Gastrocnemius medialis (tissue), 4 donors: ENCODE measurements at regions of chr15 and their contacts with region 1.

Region 1: GRCh38 chr15:44663409-44664308 is at the start of gene SPG11:
- DNase-seq: peak; percentile 95 to 98
- ATAC-seq: peak; percentile 96 to 97
- H3K4me3 ChIP-seq: peak within 1 kb of the TSS; percentile 94 to 98 (median 96)
- H3K27ac ChIP-seq: peak within 1 kb of the TSS; percentile 95 to 99 (median 98)
- H3K4me1 ChIP-seq: peaks cover 21 to 25% of the 10 kb centered on the region in 2 donors
- H3K27me3 ChIP-seq: no peaks in the 10 kb centered on the region
- CTCF ChIP-seq: peak; percentile 93 to 98 (median 96)
- POLR2A ChIP-seq: peak; percentile 92 to 96
- total RNA-seq, gene SPG11: 32.8 to 51.7 (median 43.2) TPM

Region 2: GRCh38 chr15:44728576-44729407 is 65.1 kb after region 1 on chr15:
- in situ Hi-C with region 1: loop called in 1 of 4 experiments (anchors 10 kb)
- intact Hi-C with region 1: loop called (anchors 2 kb)
- DNase-seq: peak; percentile 90 to 96
- ATAC-seq: peak; percentile 98
- H3K4me3 ChIP-seq: peak overlapping the region; percentile 60 to 98 (median 84)
- H3K27ac ChIP-seq: peak overlapping the region; percentile 87 to 100 (median 96)
- H3K4me1 ChIP-seq: peaks cover 16 to 24% of the 10 kb centered on the region in 2 donors
- H3K27me3 ChIP-seq: no peaks in the 10 kb centered on the region
- CTCF ChIP-seq: no peak
- POLR2A ChIP-seq: peak; percentile 80 to 87

Region 3: DNA sequence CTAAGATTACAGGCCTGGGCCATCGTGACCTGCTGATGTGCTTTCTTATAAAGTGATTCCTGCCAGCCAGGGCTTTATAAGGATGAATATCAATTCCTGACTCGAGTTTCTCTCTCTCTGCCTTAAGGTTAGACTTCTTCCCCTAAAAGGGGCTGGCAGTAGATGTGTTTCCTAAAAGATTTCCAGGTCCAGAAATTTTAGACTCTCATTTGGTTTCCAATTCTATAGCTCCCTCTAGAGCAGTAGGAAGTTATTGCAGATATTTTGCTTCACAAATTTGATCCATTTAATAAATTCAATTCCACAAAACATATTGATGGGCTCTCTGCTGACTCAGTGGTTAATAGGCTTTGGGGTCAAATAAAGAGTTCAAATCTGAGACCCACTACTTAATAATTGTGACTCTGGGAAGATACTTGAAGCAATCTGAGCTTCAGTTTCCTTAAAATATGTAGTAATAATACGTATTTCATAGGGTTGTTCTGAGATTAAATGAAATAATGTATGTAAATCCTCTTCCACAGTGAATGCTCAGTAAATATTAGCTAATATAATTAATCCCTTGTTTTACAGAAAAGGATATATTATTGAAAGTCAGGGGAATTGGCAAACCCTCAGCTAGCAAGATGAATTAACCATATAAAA is 74.8 kb after region 1 on chr15:
- in situ Hi-C with region 1: loop called in 3 of 4 experiments (anchors 5 to 10 kb)
- intact Hi-C with region 1: loop called (anchors 1 kb)
- DNase-seq: no peak
- ATAC-seq: peak; percentile 39 to 52
- H3K4me3 ChIP-seq: no peak overlapping the region
- H3K27ac ChIP-seq: no peak overlapping the region
- H3K4me1 ChIP-seq: no peaks in the 10 kb centered on the region
- H3K27me3 ChIP-seq: no peaks in the 10 kb centered on the region
- CTCF ChIP-seq: peak; percentile 46 to 75 (median 69)
- POLR2A ChIP-seq: no peak

Region 4: GRCh38 chr15:45022871-45023658 is 359.4 kb after region 1 on chr15 and contains the start of gene SORD:
- in situ Hi-C with region 1: loop called in 1 of 4 experiments (anchors 10 kb)
- intact Hi-C with region 1: no loop called
- DNase-seq: peak; percentile 76 to 80
- ATAC-seq: peak; percentile 90 to 94
- H3K4me3 ChIP-seq: peak within 1 kb of the TSS; percentile 62 to 86 (median 78)
- H3K27ac ChIP-seq: peak within 1 kb of the TSS; percentile 64 to 73 (median 68)
- H3K4me1 ChIP-seq: no peaks in the 10 kb centered on the region
- H3K27me3 ChIP-seq: no peaks in the 10 kb centered on the region
- CTCF ChIP-seq: no peak
- POLR2A ChIP-seq: peak in 1 of 2 donors; percentile 10
- total RNA-seq, gene SORD: 2.6 to 11.6 (median 3.6) TPM

Region 5: GRCh38 chr15:45179221-45179985 is 515.7 kb after region 1 on chr15:
- in situ Hi-C with region 1: no loop called
- intact Hi-C with region 1: no loop called
- DNase-seq: no peak
- ATAC-seq: no peak
- H3K4me3 ChIP-seq: no peak overlapping the region
- H3K27ac ChIP-seq: no peak overlapping the region
- H3K4me1 ChIP-seq: no peaks in the 10 kb centered on the region
- H3K27me3 ChIP-seq: no peaks in the 10 kb centered on the region
- CTCF ChIP-seq: peak in 3 of 5 experiments; percentile 34 to 37 (median 36)
- POLR2A ChIP-seq: no peak